HEK293 (cell line): ENCODE measurements at regions of chr9 and their contacts with region 1.

Region 1: DNA sequence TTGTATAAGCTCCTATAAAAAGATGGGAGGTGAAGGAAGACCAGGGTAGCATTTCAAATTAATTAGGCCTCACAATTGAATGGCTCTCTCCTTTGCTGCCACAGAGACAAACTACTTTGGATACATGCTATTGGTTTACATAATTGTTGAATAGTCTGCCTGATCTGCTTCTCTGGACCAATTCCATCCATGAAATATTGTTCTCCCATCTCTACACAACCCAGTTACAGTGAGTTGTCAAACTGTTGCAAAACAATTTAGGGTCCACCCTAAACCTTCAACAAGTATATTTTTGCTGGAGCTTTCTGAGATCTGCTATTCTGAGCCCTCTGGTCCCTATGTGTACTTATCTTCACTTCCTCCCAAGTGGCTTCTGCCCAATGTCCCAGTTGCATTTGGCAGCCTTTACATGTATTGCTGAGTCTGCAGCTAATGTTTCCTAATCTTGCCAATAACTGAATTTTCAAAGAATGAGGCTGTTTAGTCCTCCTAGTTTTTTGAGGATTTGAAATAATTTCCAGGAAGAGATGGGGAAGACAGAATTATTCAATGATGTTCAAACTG is 38.9 kb downstream of the AGTPBP1 start:
- H3K4me3 ChIP-seq: no peak overlapping the region
- H3K27ac ChIP-seq: no peak overlapping the region
- H3K4me1 ChIP-seq: peaks cover 9% of the 10 kb centered on the region; the same call in 1 of the 2 replicates
- CTCF ChIP-seq: no peak

Region 2: DNA sequence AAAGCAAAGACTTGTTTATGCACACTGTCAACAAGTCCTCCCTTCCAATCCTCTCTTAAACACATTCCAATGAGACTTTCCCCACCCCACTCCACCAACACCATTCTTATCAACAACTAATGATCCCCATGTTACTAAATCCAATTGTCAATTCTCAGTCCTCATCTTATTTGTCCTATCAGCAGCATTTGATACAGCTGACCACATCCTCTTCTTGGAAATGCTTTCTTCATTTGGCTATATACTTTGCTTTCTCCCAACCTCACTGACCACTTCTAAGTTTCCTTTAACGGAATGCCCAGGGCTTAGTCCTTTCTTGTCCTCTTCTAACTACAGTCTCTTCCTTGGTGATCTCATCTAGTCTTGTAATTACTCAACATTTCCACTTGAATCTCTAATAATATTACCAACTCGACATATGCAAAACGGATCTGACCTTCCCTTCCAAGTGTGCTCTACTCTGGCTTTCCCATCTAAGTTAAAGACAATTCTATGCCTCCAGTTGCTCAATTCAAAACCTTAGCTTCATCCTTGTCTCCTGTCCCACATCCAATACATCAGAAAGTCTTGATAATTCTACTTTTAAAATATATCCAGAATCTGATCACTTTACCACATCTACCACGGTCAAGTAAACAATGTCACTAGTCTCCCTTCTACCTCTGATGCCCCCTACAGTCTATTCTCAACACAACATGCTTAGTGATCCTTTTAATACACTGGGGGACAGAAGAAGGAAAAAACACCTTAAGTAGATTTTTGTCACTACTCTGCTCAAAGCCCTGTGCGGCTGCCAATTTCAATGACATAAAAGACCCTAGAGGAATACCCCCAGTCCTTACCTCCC is 13.4 kb after region 1 on chr9:
- CTCF ChIA-PET with region 1: interaction called, 12 read pairs
- POLR2A ChIA-PET with region 1: no interaction called
- H3K4me3 ChIP-seq: no peak overlapping the region
- H3K27ac ChIP-seq: no peak overlapping the region
- H3K4me1 ChIP-seq: no peaks in the 10 kb centered on the region
- CTCF ChIP-seq: no peak

Region 3: DNA sequence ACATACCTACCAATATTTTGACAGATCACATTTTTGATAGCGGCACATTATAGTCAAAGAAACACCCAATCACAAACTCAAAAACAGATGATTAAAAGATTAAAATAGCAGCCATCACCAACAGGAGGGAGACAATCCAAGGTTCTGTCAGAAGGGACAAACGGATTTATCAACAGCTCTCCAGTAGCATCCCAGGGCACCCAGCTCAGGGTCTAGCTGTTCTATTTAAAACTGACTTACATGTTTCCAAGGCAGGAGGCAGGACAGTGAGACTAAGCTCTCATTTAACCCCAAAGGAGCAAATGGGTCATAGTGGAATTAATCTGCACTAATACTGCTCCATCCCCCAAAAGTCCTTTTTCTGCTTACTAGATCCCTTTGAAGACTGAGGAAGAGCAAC is 35.7 kb after region 1 on chr9:
- CTCF ChIA-PET with region 1: interaction called, 15 read pairs
- POLR2A ChIA-PET with region 1: interaction called, 3 read pairs
- H3K4me3 ChIP-seq: no peak overlapping the region
- H3K27ac ChIP-seq: no peak overlapping the region
- H3K4me1 ChIP-seq: no peaks in the 10 kb centered on the region
- CTCF ChIP-seq: no peak